ENCODE measurements at regions of chr1 and their contacts with region 1.

Region 1: GRCh38 chr1:6205849-6206519 is at the start of gene RNF207:
- DNase-seq: peak; percentile 71
- ATAC-seq: peak; percentile 66
- H3K4me3 Mint-ChIP-seq: peak within 1 kb of the TSS; percentile 71
- H3K27ac Mint-ChIP-seq: no peak within 1 kb of the TSS
- H3K4me1 Mint-ChIP-seq: peaks cover 9% of the 10 kb centered on the region
- H3K27me3 Mint-ChIP-seq: peaks cover 13% of the 10 kb centered on the region
- total RNA-seq, gene RNF207: 12.4 to 36.7 TPM

Region 2: GRCh38 chr1:6191968-6192367 is 14.0 kb before region 1 on chr1:
- CTCF ChIA-PET with region 1: interaction called, 14 read pairs
- DNase-seq: no peak
- ATAC-seq: no peak
- H3K4me3 Mint-ChIP-seq: no peak overlapping the region
- H3K27ac Mint-ChIP-seq: no peak overlapping the region
- H3K4me1 Mint-ChIP-seq: peaks cover 24% of the 10 kb centered on the region
- H3K27me3 Mint-ChIP-seq: no peaks in the 10 kb centered on the region

Region 3: DNA sequence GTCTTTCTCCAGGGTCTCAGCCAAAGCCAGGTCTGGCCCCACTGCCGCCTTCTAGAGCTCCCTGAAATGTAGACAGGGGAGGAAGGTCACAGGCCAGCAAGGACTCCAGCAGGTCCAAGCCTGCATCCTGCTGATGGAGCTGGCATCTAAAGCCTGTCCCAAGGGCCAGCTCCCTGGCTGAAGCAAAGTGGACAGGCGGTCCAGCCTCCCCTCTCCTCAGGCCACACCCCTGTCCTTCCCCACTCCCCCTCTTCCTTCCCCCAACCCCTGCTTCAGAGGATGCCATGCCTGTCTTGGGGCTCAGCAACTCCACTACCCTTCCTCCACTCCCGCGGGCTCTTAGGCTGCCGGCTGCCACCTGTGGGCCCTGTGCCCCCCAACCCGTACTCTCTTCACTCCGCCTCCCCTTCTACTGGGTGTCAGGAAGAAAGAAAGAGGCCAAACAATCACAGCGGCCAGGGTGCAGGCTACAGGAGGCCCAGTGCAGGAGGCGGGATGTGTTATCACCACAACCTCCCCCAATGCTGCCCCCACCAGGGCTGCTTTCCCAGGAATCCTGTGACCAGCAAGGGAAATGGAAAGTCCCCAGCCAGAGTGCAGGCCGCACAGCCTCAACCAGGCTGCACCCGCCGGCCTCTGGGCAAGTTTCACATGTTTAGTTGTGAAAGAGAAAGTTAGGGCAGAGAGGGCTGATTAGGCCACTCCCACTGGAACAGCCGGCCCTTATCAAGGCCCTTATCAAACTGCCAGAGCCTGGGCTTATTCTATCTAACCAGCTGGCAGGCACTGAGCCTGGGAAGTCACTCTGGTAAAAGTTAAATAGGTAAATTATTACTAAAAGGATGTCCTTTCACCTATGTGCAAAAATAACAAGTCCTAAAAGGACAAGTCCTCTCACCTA is 153.5 kb after region 1 on chr1:
- CTCF ChIA-PET with region 1: no interaction called
- DNase-seq: peak; percentile 81
- ATAC-seq: peak; percentile 81
- H3K4me3 Mint-ChIP-seq: peak overlapping the region; percentile 53
- H3K27ac Mint-ChIP-seq: peak overlapping the region; percentile 91
- H3K4me1 Mint-ChIP-seq: peaks cover 36% of the 10 kb centered on the region
- H3K27me3 Mint-ChIP-seq: no peaks in the 10 kb centered on the region

Measured in activated CD8-positive, alpha-beta memory T cell treated with anti-CD3 and anti-CD28 coated beads, Interleukin-2, amount 10 ng/mL, durations not matched to agents 7 days and 5 days (primary cell).